ENCODE measurements at regions of chr3 and their contacts with region 1.

Region 1: GRCh38 chr3:11335056-11335608 is 62.9 kb downstream of the ATG7 start:
- DNase-seq: no peak
- ATAC-seq: peak; percentile 81
- H3K4me3 ChIP-seq: no peak overlapping the region
- H3K27ac ChIP-seq: no peak overlapping the region
- H3K4me1 ChIP-seq: no peaks in the 10 kb centered on the region
- H3K27me3 ChIP-seq: no peaks in the 10 kb centered on the region
- CTCF ChIP-seq: peak; percentile 71

Region 2: GRCh38 chr3:10945683-10946287 is 389.3 kb before region 1 on chr3:
- intact Hi-C with region 1: loop called (anchors 10 kb)
- DNase-seq: peak; percentile 82
- ATAC-seq: peak; percentile 84
- H3K4me3 ChIP-seq: no peak overlapping the region
- H3K27ac ChIP-seq: no peak overlapping the region
- H3K4me1 ChIP-seq: no peaks in the 10 kb centered on the region
- H3K27me3 ChIP-seq: no peaks in the 10 kb centered on the region
- CTCF ChIP-seq: peak; percentile 83

Region 3: DNA sequence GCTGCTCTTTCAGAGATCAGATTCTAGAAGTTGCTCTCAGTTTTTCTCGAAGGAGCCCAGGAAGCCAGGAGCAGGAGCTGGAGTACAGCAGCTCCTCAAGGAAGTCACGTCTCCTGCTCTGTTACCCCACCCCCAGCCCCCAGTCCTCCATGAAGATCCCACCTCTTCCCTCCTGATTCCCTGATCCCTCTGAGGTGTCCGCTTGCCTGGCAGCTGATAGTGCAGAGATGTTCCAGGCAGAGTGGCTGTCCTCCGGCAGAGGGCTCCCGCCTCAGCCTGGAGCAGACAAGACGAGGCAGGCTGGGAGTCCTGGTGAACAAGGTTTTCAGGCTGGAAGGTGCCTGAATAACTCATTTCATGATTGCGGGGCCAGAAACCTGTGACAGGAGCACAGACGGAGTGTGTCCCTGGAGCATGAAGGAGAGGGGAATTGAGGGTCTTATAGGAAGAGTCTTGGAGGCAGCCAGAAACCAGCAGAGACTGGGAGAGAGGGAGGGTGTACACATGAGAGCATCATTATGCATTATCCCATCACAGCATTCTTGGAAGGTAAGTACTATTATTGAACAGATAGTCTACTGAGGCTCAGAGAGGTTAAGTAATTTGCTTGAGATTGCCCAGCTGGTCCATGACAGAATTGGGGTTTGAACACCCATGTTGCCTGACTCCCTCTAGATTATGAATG is 179.6 kb before region 1 on chr3:
- intact Hi-C with region 1: loop called (anchors 10 kb)
- DNase-seq: no peak
- ATAC-seq: peak; percentile 80
- H3K4me3 ChIP-seq: peak overlapping the region; percentile 50
- H3K27ac ChIP-seq: peak overlapping the region; percentile 42
- H3K4me1 ChIP-seq: peaks cover 14% of the 10 kb centered on the region
- H3K27me3 ChIP-seq: peaks cover 25% of the 10 kb centered on the region
- CTCF ChIP-seq: peak; percentile 58

Region 4: GRCh38 chr3:11236595-11237461 is 98.3 kb before region 1 on chr3:
- intact Hi-C with region 1: loop called (anchors 10 kb)
- DNase-seq: peak; percentile 76
- ATAC-seq: peak; percentile 88
- H3K4me3 ChIP-seq: no peak overlapping the region
- H3K27ac ChIP-seq: no peak overlapping the region
- H3K4me1 ChIP-seq: no peaks in the 10 kb centered on the region
- H3K27me3 ChIP-seq: no peaks in the 10 kb centered on the region
- CTCF ChIP-seq: peak; percentile 84

Measured in upper lobe of right lung (tissue), 1 donor.